ENCODE measurements at regions of chr18 and their contacts with region 1.

Region 1: DNA sequence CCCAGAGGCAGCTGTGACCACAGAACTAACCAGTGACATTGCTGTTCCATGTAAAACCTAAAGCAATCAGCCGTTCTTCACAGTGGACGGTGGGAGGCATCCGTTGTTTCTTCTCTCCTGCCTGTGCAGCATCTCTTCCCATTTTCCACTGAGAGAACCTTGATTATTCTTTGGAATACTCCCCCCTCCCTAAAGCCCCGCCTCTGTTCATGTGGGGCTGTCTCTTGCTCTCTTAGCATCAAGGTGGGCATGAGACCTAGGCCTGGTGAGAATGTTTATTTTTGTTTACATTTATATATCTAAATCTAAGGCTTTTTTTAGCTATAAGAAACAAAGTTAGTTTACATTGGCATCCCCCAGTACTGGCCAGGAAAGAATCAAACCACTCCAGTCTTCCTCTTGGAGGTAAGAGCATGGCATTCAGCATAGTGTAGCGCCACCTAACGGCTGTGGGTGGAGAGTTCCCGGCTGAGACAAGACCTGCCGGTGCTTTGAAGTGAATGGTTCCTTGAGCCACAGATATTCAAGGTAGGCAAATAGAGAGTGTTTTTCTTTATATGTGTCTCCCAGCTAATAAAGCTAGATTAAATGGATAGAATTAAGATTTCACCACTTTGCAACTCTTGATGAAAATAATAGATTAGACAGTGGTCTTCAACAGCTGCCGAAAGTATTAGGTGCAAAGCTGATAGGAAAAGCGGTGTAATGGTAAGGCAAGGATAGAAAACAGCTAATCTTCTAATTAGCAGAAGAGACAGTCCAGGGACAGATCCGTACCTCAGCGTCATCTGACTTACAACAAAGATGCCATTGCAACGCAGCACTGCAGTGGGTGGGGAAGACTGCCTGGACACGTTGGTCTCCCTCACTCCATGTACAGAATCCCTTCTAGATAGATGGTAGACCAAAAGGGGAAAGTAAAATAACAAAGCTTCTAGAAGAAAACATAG is 219.6 kb upstream of the RAB12 start:
- DNase-seq: peak; percentile 53
- H3K4me3 ChIP-seq: no peak overlapping the region
- H3K27ac ChIP-seq: no peak overlapping the region
- H3K4me1 ChIP-seq: no peaks in the 10 kb centered on the region
- H3K27me3 ChIP-seq: no peaks in the 10 kb centered on the region
- CTCF ChIP-seq: peak; percentile 92 to 96

Region 2: DNA sequence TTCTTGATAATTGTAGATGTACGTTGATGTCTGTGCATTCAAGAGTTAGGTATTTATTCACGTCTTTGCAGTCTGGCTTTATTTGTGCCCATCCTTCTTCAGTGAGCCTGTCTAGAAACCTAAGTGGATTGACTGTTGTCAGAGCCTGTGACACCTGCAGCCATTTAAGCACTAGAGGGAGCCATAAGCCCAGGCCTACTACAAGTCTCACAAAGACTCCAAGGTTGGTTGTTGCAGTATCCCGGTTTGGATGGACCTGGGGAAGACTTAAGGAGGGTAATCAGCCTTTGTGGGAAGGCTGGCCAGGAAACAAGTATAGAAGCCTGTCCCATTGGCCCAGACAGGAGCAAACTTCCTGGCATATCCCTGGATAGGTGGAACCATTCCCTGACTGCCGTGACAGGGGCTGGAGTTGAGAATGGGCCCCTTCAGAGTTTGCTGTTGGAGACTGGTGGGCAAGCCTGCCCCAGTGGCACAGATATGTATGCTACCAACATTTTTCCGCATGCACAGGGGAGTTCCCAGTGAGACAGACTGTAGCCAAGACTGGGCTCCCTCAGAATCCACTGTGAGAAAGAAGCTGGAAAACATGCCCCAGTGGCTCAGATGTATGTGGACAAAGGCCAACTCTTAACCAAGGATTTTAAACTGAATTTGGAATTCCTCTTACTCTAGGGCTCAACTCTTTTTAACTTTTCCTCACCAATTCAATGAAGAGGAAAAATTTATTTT is 1168.1 kb before region 1 on chr18:
- CTCF ChIA-PET with region 1: no interaction called
- dilution Hi-C with region 1: no loop called
- in situ Hi-C with region 1: no loop called
- intact Hi-C with region 1: loop called (anchors 1 kb)
- DNase-seq: peak; percentile 58
- H3K4me3 ChIP-seq: no peak overlapping the region
- H3K27ac ChIP-seq: no peak overlapping the region
- H3K4me1 ChIP-seq: no peaks in the 10 kb centered on the region
- H3K27me3 ChIP-seq: no peaks in the 10 kb centered on the region
- CTCF ChIP-seq: peak; percentile 94 to 96

Region 3: DNA sequence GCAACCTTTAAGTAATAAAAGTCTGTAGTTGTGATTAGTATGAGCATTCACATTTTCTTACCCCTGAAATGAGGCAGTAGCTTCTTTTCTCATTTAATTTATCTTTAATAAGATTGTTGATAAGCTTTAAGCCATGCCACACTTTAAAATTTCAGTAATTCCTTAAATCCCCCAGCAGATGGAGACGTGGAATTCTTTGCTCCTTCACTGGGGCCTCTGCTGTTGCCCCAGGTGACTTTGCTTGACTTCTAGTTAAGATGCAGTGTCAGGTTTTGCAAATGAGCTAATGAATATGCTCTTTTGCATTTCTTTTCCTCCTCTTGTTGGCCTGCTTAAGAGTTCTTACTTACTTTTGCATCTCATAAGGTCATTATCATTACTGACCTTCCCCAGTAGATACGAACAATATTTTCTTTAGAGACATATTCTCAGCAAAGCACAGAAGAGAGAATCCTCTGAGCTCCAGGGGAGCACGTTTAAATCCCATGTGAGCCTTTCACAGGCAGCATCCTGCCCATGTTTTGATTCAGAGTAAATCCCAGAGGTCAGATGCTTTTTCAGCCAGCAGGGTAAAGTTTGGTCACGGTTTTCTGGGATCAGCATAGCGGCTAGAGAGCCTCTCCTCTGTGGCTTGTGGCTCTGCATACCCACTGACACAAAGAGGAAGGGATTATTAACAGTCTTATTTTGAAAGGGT is 599.7 kb before region 1 on chr18:
- CTCF ChIA-PET with region 1: no interaction called
- dilution Hi-C with region 1: no loop called
- in situ Hi-C with region 1: loop called (anchors 25 kb)
- intact Hi-C with region 1: loop called (anchors 1 kb)
- DNase-seq: peak; percentile 37
- H3K4me3 ChIP-seq: no peak overlapping the region
- H3K27ac ChIP-seq: no peak overlapping the region
- H3K4me1 ChIP-seq: no peaks in the 10 kb centered on the region
- H3K27me3 ChIP-seq: no peaks in the 10 kb centered on the region
- CTCF ChIP-seq: peak; percentile 50 to 68

Region 4: GRCh38 chr18:8052237-8052701 is 337.4 kb before region 1 on chr18:
- CTCF ChIA-PET with region 1: no interaction called
- dilution Hi-C with region 1: no loop called
- in situ Hi-C with region 1: no loop called
- intact Hi-C with region 1: loop called (anchors 10 kb)
- DNase-seq: peak; percentile 36
- H3K4me3 ChIP-seq: no peak overlapping the region
- H3K27ac ChIP-seq: no peak overlapping the region
- H3K4me1 ChIP-seq: no peaks in the 10 kb centered on the region
- H3K27me3 ChIP-seq: no peaks in the 10 kb centered on the region
- CTCF ChIP-seq: peak in 1 of 2 donors; percentile 32

Region 5: GRCh38 chr18:8084160-8084559 is 305.5 kb before region 1 on chr18:
- CTCF ChIA-PET with region 1: no interaction called
- dilution Hi-C with region 1: no loop called
- in situ Hi-C with region 1: loop called in 1 of 2 experiments (anchors 25 kb)
- intact Hi-C with region 1: loop called (anchors 2 kb)
- DNase-seq: peak; percentile 46
- H3K4me3 ChIP-seq: no peak overlapping the region
- H3K27ac ChIP-seq: no peak overlapping the region
- H3K4me1 ChIP-seq: no peaks in the 10 kb centered on the region
- H3K27me3 ChIP-seq: no peaks in the 10 kb centered on the region
- CTCF ChIP-seq: peak; percentile 66 to 70

Region 6: GRCh38 chr18:8188184-8188583 is 201.5 kb before region 1 on chr18:
- CTCF ChIA-PET with region 1: no interaction called
- dilution Hi-C with region 1: no loop called
- in situ Hi-C with region 1: no loop called
- intact Hi-C with region 1: no loop called
- DNase-seq: no peak
- H3K4me3 ChIP-seq: no peak overlapping the region
- H3K27ac ChIP-seq: no peak overlapping the region
- H3K4me1 ChIP-seq: no peaks in the 10 kb centered on the region
- H3K27me3 ChIP-seq: no peaks in the 10 kb centered on the region
- CTCF ChIP-seq: no peak

Region 7: GRCh38 chr18:8433323-8433722 is 43.7 kb after region 1 on chr18:
- CTCF ChIA-PET with region 1: no interaction called
- dilution Hi-C with region 1: no loop called
- in situ Hi-C with region 1: no loop called
- intact Hi-C with region 1: no loop called
- DNase-seq: no peak
- H3K4me3 ChIP-seq: no peak overlapping the region
- H3K27ac ChIP-seq: no peak overlapping the region
- H3K4me1 ChIP-seq: no peaks in the 10 kb centered on the region
- H3K27me3 ChIP-seq: peaks cover 2% of the 10 kb centered on the region
- CTCF ChIP-seq: no peak

Region 8: GRCh38 chr18:8443505-8443904 is 53.8 kb after region 1 on chr18:
- CTCF ChIA-PET with region 1: no interaction called
- dilution Hi-C with region 1: loop called (anchors 10 kb)
- in situ Hi-C with region 1: no loop called
- intact Hi-C with region 1: no loop called
- DNase-seq: peak; percentile 17
- H3K4me3 ChIP-seq: no peak overlapping the region
- H3K27ac ChIP-seq: no peak overlapping the region
- H3K4me1 ChIP-seq: peaks cover 5% of the 10 kb centered on the region
- H3K27me3 ChIP-seq: no peaks in the 10 kb centered on the region
- CTCF ChIP-seq: no peak

Region 9: GRCh38 chr18:8478166-8478967 is 88.7 kb after region 1 on chr18:
- CTCF ChIA-PET with region 1: interaction called, 3 read pairs
- dilution Hi-C with region 1: no loop called
- in situ Hi-C with region 1: no loop called
- intact Hi-C with region 1: loop called (anchors 1 kb)
- DNase-seq: peak; percentile 29
- H3K4me3 ChIP-seq: no peak overlapping the region
- H3K27ac ChIP-seq: no peak overlapping the region
- H3K4me1 ChIP-seq: no peaks in the 10 kb centered on the region
- H3K27me3 ChIP-seq: no peaks in the 10 kb centered on the region
- CTCF ChIP-seq: peak; percentile 94 to 95

Region 10: DNA sequence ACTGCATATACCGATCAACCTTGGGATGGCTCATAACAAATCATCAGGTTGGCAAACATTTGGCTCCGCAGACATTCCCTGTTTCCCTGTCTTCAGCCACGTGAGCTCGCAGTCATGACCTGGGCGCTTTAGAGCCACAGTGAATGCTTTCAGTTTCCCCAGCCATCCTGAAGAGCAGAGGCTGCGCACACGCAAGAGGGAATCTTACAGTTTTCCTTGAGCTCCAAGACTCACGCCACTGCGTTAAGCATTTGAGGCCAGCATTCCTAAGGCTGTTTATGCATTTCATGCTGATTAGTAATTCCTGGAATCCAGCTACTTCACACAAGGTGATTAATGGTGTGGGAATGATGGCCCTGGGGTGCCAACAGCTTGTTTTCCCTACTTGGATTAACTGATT is 410.8 kb after region 1 on chr18:
- CTCF ChIA-PET with region 1: no interaction called
- dilution Hi-C with region 1: no loop called
- in situ Hi-C with region 1: no loop called
- intact Hi-C with region 1: no loop called
- DNase-seq: peak; percentile 78
- H3K4me3 ChIP-seq: no peak overlapping the region
- H3K27ac ChIP-seq: peak overlapping the region; percentile 51
- H3K4me1 ChIP-seq: peaks cover 39% of the 10 kb centered on the region
- H3K27me3 ChIP-seq: no peaks in the 10 kb centered on the region
- CTCF ChIP-seq: no peak